Activated CD8-positive, alpha-beta T cell treated with anti-CD3 and anti-CD28 coated beads for 36 hours (primary cell): ENCODE measurements at regions of chr20 and their contacts with region 1.

Region 1: GRCh38 chr20:56400090-56400542 is 7.7 kb downstream of the CSTF1 start:
- DNase-seq: peak; percentile 80
- ATAC-seq: peak; percentile 68
- H3K4me3 Mint-ChIP-seq: no peak overlapping the region
- H3K27ac Mint-ChIP-seq: peak overlapping the region; percentile 30
- H3K4me1 Mint-ChIP-seq: peaks cover 30% of the 10 kb centered on the region
- H3K27me3 Mint-ChIP-seq: no peaks in the 10 kb centered on the region
- CTCF ChIP-seq: peak; percentile 87

Region 2: DNA sequence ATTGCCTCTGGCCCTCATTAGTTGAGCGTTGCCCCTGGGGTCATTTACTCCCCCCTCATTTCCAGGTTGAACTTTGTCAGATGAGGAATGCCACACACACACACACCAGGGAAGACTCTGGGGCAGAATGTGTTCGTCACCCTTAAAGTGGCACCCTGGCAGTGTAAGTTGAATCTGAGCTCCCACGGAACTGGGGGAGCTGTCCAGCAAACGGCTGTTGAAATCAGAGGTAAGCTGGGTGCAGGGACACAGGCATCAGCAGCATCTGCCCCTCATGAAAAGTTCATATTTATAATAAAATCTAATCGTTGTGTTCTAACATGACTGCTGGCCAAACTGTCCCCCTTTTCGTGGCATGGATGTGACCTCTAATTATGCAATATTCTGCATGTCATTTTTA is 155.9 kb before region 1 on chr20:
- CTCF ChIA-PET with region 1: no interaction called
- POLR2A ChIA-PET with region 1: no interaction called
- intact Hi-C with region 1: no loop called
- DNase-seq: no peak
- ATAC-seq: no peak
- H3K4me3 Mint-ChIP-seq: no peak overlapping the region
- H3K27ac Mint-ChIP-seq: no peak overlapping the region
- H3K4me1 Mint-ChIP-seq: no peaks in the 10 kb centered on the region
- H3K27me3 Mint-ChIP-seq: peaks cover 20% of the 10 kb centered on the region
- CTCF ChIP-seq: no peak

Region 3: DNA sequence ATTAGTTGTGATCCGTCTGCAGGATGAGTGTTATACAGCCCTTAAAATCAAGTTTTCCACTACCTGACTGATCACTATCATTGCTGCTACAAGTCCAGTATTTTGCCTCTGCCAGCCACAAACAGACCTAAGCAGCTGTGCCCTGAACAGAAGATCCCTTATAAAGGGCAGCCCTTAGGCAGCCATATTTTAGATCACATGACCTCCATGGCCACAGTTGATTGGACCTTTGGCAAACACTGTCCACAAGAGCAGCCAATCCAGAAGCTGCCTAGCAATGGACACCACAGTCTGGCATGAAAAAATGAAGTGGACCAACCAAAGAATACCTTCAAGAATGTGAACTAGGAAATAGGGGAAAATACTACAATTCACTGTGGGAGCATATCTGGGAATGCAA is 100.8 kb before region 1 on chr20:
- CTCF ChIA-PET with region 1: no interaction called
- POLR2A ChIA-PET with region 1: no interaction called
- intact Hi-C with region 1: no loop called
- DNase-seq: no peak
- ATAC-seq: no peak
- H3K4me3 Mint-ChIP-seq: no peak overlapping the region
- H3K27ac Mint-ChIP-seq: no peak overlapping the region
- H3K4me1 Mint-ChIP-seq: no peaks in the 10 kb centered on the region
- H3K27me3 Mint-ChIP-seq: peaks cover 7% of the 10 kb centered on the region
- CTCF ChIP-seq: no peak

Region 4: GRCh38 chr20:56439771-56440291 is 39.7 kb after region 1 on chr20:
- CTCF ChIA-PET with region 1: no interaction called
- POLR2A ChIA-PET with region 1: no interaction called
- intact Hi-C with region 1: no loop called
- DNase-seq: peak; percentile 64
- ATAC-seq: peak; percentile 61
- H3K4me3 Mint-ChIP-seq: peak overlapping the region; percentile 56
- H3K27ac Mint-ChIP-seq: peak overlapping the region; percentile 96
- H3K4me1 Mint-ChIP-seq: peaks cover 49% of the 10 kb centered on the region
- H3K27me3 Mint-ChIP-seq: no peaks in the 10 kb centered on the region
- CTCF ChIP-seq: no peak

Region 5: GRCh38 chr20:56513161-56514150 is 113.3 kb after region 1 on chr20:
- CTCF ChIA-PET with region 1: interaction called, 7 read pairs
- POLR2A ChIA-PET with region 1: no interaction called
- intact Hi-C with region 1: loop called (anchors 5 kb)
- DNase-seq: no peak
- ATAC-seq: no peak
- H3K4me3 Mint-ChIP-seq: no peak overlapping the region
- H3K27ac Mint-ChIP-seq: no peak overlapping the region
- H3K4me1 Mint-ChIP-seq: no peaks in the 10 kb centered on the region
- H3K27me3 Mint-ChIP-seq: no peaks in the 10 kb centered on the region
- CTCF ChIP-seq: no peak